ENCODE measurements at regions of chr5 and their contacts with region 1.

Region 1: GRCh38 chr5:86814315-86814714 is 196.6 kb downstream of the COX7C start:
- DNase-seq: no peak
- H3K4me3 ChIP-seq: no peak overlapping the region
- H3K27ac ChIP-seq: no peak overlapping the region
- H3K4me1 ChIP-seq: no peaks in the 10 kb centered on the region
- H3K27me3 ChIP-seq: no peaks in the 10 kb centered on the region
- CTCF ChIP-seq: no peak

Region 2: DNA sequence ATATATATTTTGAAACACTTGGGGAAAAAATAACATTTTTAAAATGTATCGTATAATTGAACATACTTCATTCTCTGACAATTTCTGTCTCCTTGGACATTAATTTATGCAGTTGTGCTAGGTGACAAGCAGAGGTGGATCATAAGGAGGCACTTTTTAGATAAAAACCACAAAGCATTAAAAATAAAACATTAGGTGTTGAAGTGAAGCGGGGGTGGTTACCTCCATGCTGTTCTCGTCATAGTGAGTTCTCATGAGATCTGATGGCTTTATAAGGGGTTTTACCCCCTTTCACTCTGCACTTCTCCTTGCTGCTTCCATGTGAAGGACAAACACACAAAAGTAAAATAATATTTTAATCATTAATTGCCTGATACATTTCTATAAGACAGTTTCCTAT is 208.4 kb before region 1 on chr5:
- CTCF ChIA-PET with region 1: no interaction called
- POLR2A ChIA-PET with region 1: no interaction called
- intact Hi-C with region 1: no loop called
- DNase-seq: no peak
- H3K4me3 ChIP-seq: no peak overlapping the region
- H3K27ac ChIP-seq: no peak overlapping the region
- H3K4me1 ChIP-seq: no peaks in the 10 kb centered on the region
- H3K27me3 ChIP-seq: no peaks in the 10 kb centered on the region
- CTCF ChIP-seq: no peak

Region 3: GRCh38 chr5:86735370-86735769 is 78.9 kb before region 1 on chr5:
- CTCF ChIA-PET with region 1: no interaction called
- POLR2A ChIA-PET with region 1: interaction called, 16 read pairs
- intact Hi-C with region 1: no loop called
- DNase-seq: no peak
- H3K4me3 ChIP-seq: no peak overlapping the region
- H3K27ac ChIP-seq: no peak overlapping the region
- H3K4me1 ChIP-seq: no peaks in the 10 kb centered on the region
- H3K27me3 ChIP-seq: no peaks in the 10 kb centered on the region
- CTCF ChIP-seq: no peak

Region 4: GRCh38 chr5:86780030-86780429 is 34.3 kb before region 1 on chr5:
- CTCF ChIA-PET with region 1: no interaction called
- POLR2A ChIA-PET with region 1: no interaction called
- intact Hi-C with region 1: no loop called
- DNase-seq: no peak
- H3K4me3 ChIP-seq: no peak overlapping the region
- H3K27ac ChIP-seq: no peak overlapping the region
- H3K4me1 ChIP-seq: no peaks in the 10 kb centered on the region
- H3K27me3 ChIP-seq: no peaks in the 10 kb centered on the region
- CTCF ChIP-seq: no peak